ENCODE measurements at regions of chr12 and their contacts with region 1.

Region 1: GRCh38 chr12:22477166-22477893 is 67.0 kb downstream of the C2CD5 start:
- DNase-seq: peak; percentile 85
- ATAC-seq: peak; percentile 85
- H3K4me3 ChIP-seq: no peak overlapping the region
- H3K27ac ChIP-seq: peak overlapping the region; percentile 21; the same call in 1 of the 2 replicates
- H3K4me1 ChIP-seq: no peaks in the 10 kb centered on the region; the same call in 1 of the 2 replicates
- H3K27me3 ChIP-seq: no peaks in the 10 kb centered on the region
- CTCF ChIP-seq: no peak
- POLR2A ChIP-seq: no peak
- RAD21 ChIP-seq: no peak

Region 2: DNA sequence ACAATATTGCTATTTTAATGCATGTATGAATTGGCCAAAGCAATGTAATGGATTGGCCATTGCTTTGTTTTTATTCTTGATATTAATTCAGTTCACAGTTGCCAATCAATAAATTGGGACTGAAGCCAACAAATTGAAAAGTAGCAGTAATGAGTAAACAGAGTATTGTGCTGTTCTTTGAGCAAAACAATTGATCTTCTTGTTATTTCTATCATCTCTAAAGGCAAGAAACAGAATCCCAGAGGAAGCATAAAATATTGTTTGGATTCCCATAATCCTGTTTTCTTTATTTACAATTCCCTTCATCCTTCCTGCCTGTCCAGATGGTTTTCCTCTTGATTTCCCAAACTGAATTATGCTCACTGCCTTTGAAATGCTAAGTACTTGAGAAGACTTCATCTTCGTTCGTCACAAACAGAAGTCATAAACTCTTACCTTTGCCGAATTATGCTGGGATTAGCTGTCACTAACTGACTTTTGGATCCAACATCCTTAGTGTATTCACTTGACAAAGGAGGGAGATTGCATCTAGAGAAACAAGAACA is 228.7 kb before region 1 on chr12:
- CTCF ChIA-PET with region 1: no interaction called
- POLR2A ChIA-PET with region 1: interaction called, 10 read pairs
- dilution Hi-C with region 1: no loop called
- in situ Hi-C with region 1: no loop called
- intact Hi-C with region 1: no loop called
- DNase-seq: no peak
- ATAC-seq: no peak
- H3K4me3 ChIP-seq: no peak overlapping the region
- H3K27ac ChIP-seq: no peak overlapping the region
- H3K4me1 ChIP-seq: no peaks in the 10 kb centered on the region
- H3K27me3 ChIP-seq: peaks cover 6% of the 10 kb centered on the region
- CTCF ChIP-seq: no peak
- POLR2A ChIP-seq: no peak
- RAD21 ChIP-seq: no peak

Region 3: GRCh38 chr12:22459838-22460490 is 17.4 kb before region 1 on chr12:
- CTCF ChIA-PET with region 1: interaction called, 10 read pairs
- POLR2A ChIA-PET with region 1: no interaction called
- dilution Hi-C with region 1: no loop called
- in situ Hi-C with region 1: no loop called
- intact Hi-C with region 1: no loop called
- DNase-seq: peak; percentile 54
- ATAC-seq: peak; percentile 79
- H3K4me3 ChIP-seq: no peak overlapping the region
- H3K27ac ChIP-seq: no peak overlapping the region
- H3K4me1 ChIP-seq: no peaks in the 10 kb centered on the region
- H3K27me3 ChIP-seq: no peaks in the 10 kb centered on the region
- CTCF ChIP-seq: peak; percentile 60
- POLR2A ChIP-seq: no peak
- RAD21 ChIP-seq: peak; percentile 38

Region 4: GRCh38 chr12:22518067-22518719 is 40.9 kb after region 1 on chr12:
- CTCF ChIA-PET with region 1: no interaction called
- POLR2A ChIA-PET with region 1: no interaction called
- dilution Hi-C with region 1: no loop called
- in situ Hi-C with region 1: no loop called
- intact Hi-C with region 1: loop called (anchors 5 kb)
- DNase-seq: peak; percentile 15
- ATAC-seq: no peak
- H3K4me3 ChIP-seq: no peak overlapping the region
- H3K27ac ChIP-seq: no peak overlapping the region
- H3K4me1 ChIP-seq: no peaks in the 10 kb centered on the region
- H3K27me3 ChIP-seq: no peaks in the 10 kb centered on the region
- CTCF ChIP-seq: no peak
- POLR2A ChIP-seq: no peak
- RAD21 ChIP-seq: no peak

Region 5: GRCh38 chr12:22529281-22530060 is 52.1 kb after region 1 on chr12:
- CTCF ChIA-PET with region 1: no interaction called
- POLR2A ChIA-PET with region 1: no interaction called
- dilution Hi-C with region 1: no loop called
- in situ Hi-C with region 1: no loop called
- intact Hi-C with region 1: loop called (anchors 1 kb)
- DNase-seq: peak; percentile 63
- ATAC-seq: peak; percentile 40; the same call in 1 of the 2 replicates
- H3K4me3 ChIP-seq: no peak overlapping the region
- H3K27ac ChIP-seq: peak overlapping the region; percentile 69
- H3K4me1 ChIP-seq: peaks cover 7% of the 10 kb centered on the region
- H3K27me3 ChIP-seq: no peaks in the 10 kb centered on the region
- CTCF ChIP-seq: peak; percentile 44
- POLR2A ChIP-seq: no peak
- RAD21 ChIP-seq: no peak

Region 6: GRCh38 chr12:22544038-22544979 is 67.0 kb after region 1 on chr12 and contains the start of gene C2CD5:
- CTCF ChIA-PET with region 1: no interaction called
- POLR2A ChIA-PET with region 1: no interaction called
- dilution Hi-C with region 1: no loop called
- in situ Hi-C with region 1: no loop called
- intact Hi-C with region 1: loop called (anchors 5 kb)
- DNase-seq: peak; percentile 97
- ATAC-seq: peak; percentile 96
- H3K4me3 ChIP-seq: peak within 1 kb of the TSS; percentile 80
- H3K27ac ChIP-seq: peak within 1 kb of the TSS; percentile 96
- H3K4me1 ChIP-seq: peaks cover 4% of the 10 kb centered on the region
- H3K27me3 ChIP-seq: no peaks in the 10 kb centered on the region
- CTCF ChIP-seq: peak; percentile 42
- POLR2A ChIP-seq: peak; percentile 89
- RAD21 ChIP-seq: peak; percentile 37
- total RNA-seq, gene C2CD5: 15.8 and 16.1 TPM in 2 replicates

Region 7: GRCh38 chr12:22624870-22625761 is 147.8 kb after region 1 on chr12 and contains the start of gene ETNK1:
- CTCF ChIA-PET with region 1: no interaction called
- POLR2A ChIA-PET with region 1: no interaction called
- dilution Hi-C with region 1: no loop called
- in situ Hi-C with region 1: no loop called
- intact Hi-C with region 1: loop called (anchors 5 kb)
- DNase-seq: peak; percentile 91
- ATAC-seq: peak; percentile 99
- H3K4me3 ChIP-seq: peak within 1 kb of the TSS; percentile 74
- H3K27ac ChIP-seq: peak within 1 kb of the TSS; percentile 90
- H3K4me1 ChIP-seq: peaks cover 3% of the 10 kb centered on the region; the same call in 1 of the 2 replicates
- H3K27me3 ChIP-seq: no peaks in the 10 kb centered on the region
- CTCF ChIP-seq: no peak
- POLR2A ChIP-seq: peak; percentile 95
- RAD21 ChIP-seq: no peak
- total RNA-seq, gene ETNK1: 33.3 and 35.3 TPM in 2 replicates